ENCODE measurements at regions of chr15 and their contacts with region 1.

Region 1: DNA sequence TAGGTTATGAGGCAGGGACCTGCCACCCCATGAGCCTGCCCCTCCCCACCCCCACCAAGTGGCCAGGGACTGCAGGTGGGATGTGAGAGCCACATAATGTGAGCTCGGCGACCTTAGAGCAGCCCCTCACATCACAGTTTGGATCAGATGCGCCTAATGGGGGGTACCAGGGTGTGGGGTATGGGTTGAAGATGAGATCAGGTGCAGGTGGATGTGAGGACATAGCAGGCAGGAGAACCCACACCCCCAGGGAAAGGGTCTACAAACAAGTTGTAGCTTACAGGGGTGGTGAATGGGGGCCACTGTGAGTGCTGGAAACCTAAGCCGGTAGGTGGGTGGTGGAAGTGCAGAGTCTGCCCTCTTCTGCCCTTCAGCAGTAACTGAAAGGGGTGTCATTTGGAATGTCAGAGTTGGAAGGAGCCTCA is 94.0 kb downstream of the CORO2B start:
- DNase-seq: no peak
- H3K4me3 Mint-ChIP-seq: no peak overlapping the region
- H3K27ac Mint-ChIP-seq: no peak overlapping the region
- H3K4me1 Mint-ChIP-seq: no peaks in the 10 kb centered on the region
- H3K27me3 Mint-ChIP-seq: peaks cover 27% of the 10 kb centered on the region

Region 2: DNA sequence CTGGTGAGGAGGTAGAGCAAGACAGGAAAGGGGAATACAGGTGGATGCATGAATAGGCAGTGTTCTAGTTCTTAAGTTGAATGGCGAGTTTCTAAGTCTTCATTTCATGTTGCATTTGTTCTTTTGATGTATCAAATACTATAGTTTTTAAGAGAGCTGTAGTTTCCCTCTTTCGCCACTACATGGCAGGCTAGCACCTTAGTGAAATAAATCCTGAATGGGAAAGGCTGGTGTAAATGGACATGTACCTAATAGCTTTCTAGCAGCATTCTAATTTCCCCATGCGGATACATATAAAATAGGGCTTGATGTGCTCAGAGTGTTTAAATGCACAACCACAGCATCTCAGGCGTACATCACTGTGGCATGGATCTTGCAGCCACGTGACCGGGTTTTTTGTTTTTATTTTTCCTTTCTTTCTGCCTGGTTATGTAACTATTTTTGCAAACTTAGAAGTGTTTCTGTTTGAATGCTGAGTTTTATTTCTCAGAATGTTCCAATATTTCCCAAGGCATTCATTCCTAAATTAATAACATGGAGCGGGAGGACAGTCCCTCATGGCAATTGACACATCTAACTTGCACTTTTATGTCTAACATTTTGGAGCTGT is 419.8 kb before region 1 on chr15:
- CTCF ChIA-PET with region 1: interaction called, 11 read pairs
- DNase-seq: peak; percentile 57
- H3K4me3 Mint-ChIP-seq: no peak overlapping the region
- H3K27ac Mint-ChIP-seq: no peak overlapping the region
- H3K4me1 Mint-ChIP-seq: peaks cover 2% of the 10 kb centered on the region
- H3K27me3 Mint-ChIP-seq: peaks cover 49% of the 10 kb centered on the region

Region 3: GRCh38 chr15:68402432-68403160 is 270.2 kb before region 1 on chr15:
- CTCF ChIA-PET with region 1: no interaction called
- DNase-seq: no peak
- H3K4me3 Mint-ChIP-seq: no peak overlapping the region
- H3K27ac Mint-ChIP-seq: no peak overlapping the region
- H3K4me1 Mint-ChIP-seq: no peaks in the 10 kb centered on the region
- H3K27me3 Mint-ChIP-seq: peaks cover 20% of the 10 kb centered on the region

Region 4: GRCh38 chr15:68526269-68526668 is 146.5 kb before region 1 on chr15:
- CTCF ChIA-PET with region 1: no interaction called
- DNase-seq: no peak
- H3K4me3 Mint-ChIP-seq: no peak overlapping the region
- H3K27ac Mint-ChIP-seq: no peak overlapping the region
- H3K4me1 Mint-ChIP-seq: peaks cover 22% of the 10 kb centered on the region
- H3K27me3 Mint-ChIP-seq: peaks cover 46% of the 10 kb centered on the region

Region 5: GRCh38 chr15:68550481-68551295 is 122.1 kb before region 1 on chr15:
- CTCF ChIA-PET with region 1: interaction called, 136 read pairs
- DNase-seq: peak; percentile 86
- H3K4me3 Mint-ChIP-seq: no peak overlapping the region
- H3K27ac Mint-ChIP-seq: peak overlapping the region; percentile 16
- H3K4me1 Mint-ChIP-seq: no peaks in the 10 kb centered on the region
- H3K27me3 Mint-ChIP-seq: peaks cover 31% of the 10 kb centered on the region

Region 6: GRCh38 chr15:68559345-68560310 is 113.2 kb before region 1 on chr15:
- CTCF ChIA-PET with region 1: interaction called, 136 read pairs
- DNase-seq: peak; percentile 76
- H3K4me3 Mint-ChIP-seq: peak overlapping the region; percentile 60
- H3K27ac Mint-ChIP-seq: no peak overlapping the region
- H3K4me1 Mint-ChIP-seq: peaks cover 25% of the 10 kb centered on the region
- H3K27me3 Mint-ChIP-seq: peaks cover 81% of the 10 kb centered on the region

Region 7: GRCh38 chr15:68644077-68644904 is 28.5 kb before region 1 on chr15:
- CTCF ChIA-PET with region 1: no interaction called
- DNase-seq: no peak
- H3K4me3 Mint-ChIP-seq: no peak overlapping the region
- H3K27ac Mint-ChIP-seq: no peak overlapping the region
- H3K4me1 Mint-ChIP-seq: no peaks in the 10 kb centered on the region
- H3K27me3 Mint-ChIP-seq: peaks cover 12% of the 10 kb centered on the region

Region 8: DNA sequence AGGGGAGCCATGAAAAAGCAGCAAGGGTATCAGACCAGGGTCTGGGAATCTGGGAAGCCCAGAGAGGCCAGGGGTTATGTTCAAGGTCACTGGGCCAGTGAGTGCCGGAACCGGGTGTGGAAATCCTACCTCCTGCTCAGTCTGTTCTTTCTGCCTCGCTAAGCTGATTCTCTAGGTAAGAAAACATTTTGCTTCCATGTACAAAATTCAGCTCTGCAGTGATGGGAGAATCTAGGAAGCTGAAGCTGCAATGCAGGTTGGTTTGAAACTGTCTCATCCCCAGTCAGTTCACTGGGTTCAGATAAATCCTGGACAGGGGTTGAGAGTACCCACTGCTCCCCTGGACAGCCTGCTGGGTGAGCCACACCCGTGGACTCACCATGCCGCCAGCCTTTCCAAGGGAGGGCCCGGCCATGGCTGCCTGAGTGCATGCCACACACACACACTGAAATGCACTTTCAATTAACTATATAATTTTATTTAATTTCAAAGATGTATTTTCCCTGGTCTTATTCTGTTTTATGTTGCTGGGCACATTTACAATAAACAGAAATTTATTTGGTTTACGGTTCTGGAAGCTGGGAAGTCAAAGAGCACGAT is 14.4 kb after region 1 on chr15:
- CTCF ChIA-PET with region 1: interaction called, 10 read pairs
- DNase-seq: no peak
- H3K4me3 Mint-ChIP-seq: no peak overlapping the region
- H3K27ac Mint-ChIP-seq: no peak overlapping the region
- H3K4me1 Mint-ChIP-seq: no peaks in the 10 kb centered on the region
- H3K27me3 Mint-ChIP-seq: peaks cover 7% of the 10 kb centered on the region

Region 9: GRCh38 chr15:68875377-68876116 is 202.8 kb after region 1 on chr15:
- CTCF ChIA-PET with region 1: interaction called, 19 read pairs
- DNase-seq: peak; percentile 94
- H3K4me3 Mint-ChIP-seq: no peak overlapping the region
- H3K27ac Mint-ChIP-seq: no peak overlapping the region
- H3K4me1 Mint-ChIP-seq: peaks cover 4% of the 10 kb centered on the region
- H3K27me3 Mint-ChIP-seq: peaks cover 22% of the 10 kb centered on the region

Measured in activated naive CD4-positive, alpha-beta T cell treated with anti-CD3 and anti-CD28 coated beads, Interleukin-2, amount 10 ng/mL, durations not matched to agents 7 days and 5 days (primary cell).